Common myeloid progenitor, CD34-positive (primary cell): ENCODE measurements at regions of chr19 and their contacts with region 1.

Region 1: DNA sequence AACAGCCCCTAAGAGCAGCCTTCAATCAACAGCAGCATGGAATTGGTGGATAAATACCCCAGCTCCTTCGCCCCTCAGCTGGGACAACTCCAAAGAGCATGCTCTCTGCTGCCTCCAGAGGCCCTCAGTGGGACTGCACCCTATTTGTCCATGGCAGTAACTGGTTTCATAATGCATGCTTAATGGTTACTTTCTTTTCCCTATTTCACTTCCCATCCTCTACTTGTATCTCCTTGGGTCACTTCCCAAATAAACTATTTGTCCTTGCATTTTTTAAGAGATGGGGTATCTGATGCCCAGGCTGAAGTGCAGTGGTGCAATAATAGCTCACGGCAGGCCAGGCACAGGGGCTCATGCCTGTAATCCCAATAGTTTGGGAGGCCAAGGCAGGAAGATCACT is 13.5 kb upstream of the TPM4 start:
- DNase-seq: peak in 2 of 3 donors; percentile 67 to 78
- H3K4me3 ChIP-seq: no peak overlapping the region
- H3K27ac ChIP-seq: no peak overlapping the region
- H3K4me1 ChIP-seq: peaks cover 0 to 15% (median 4%) of the 10 kb centered on the region in 4 experiments
- H3K27me3 ChIP-seq: no peaks in the 10 kb centered on the region

Region 2: DNA sequence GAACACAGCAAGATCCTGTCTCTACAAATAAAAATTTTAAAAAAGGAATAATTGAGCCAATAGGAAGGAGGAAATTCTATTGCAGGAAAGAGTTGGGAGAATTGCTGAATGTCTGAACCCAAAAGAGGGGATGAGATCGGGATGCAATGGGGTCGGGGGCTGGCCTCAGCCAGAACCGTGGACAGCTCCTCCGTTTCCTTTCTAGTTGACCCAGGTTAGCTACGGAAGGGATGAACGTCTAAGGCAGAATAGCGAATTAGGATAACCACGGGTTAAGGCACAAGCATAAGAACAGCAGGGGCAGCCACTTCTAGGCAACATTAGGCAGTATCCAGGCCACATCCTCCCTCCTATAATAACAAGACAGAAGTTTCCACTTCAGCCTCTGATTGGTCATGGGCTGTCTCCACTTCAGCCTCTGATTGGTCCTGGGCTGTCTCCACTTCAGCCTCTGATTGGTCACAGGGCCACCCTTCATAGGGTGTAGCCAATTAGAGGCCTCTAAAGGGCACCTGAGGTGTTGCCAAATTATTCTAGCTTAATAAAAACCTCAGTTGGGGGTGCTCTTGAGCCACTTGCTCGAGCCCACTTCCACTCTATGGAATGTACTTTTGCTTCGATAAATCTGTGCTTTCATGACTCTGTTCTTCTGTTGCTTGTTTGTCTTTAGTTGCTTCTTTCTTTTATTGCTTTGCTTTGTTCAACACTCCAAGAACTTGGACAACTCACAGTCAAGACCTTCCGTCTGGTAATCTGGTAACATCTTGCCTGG is 11.3 kb before region 1 on chr19:
- CTCF ChIA-PET with region 1: interaction called, 29 read pairs
- POLR2A ChIA-PET with region 1: no interaction called
- DNase-seq: peak; percentile 59 to 82 (median 72)
- H3K4me3 ChIP-seq: no peak overlapping the region
- H3K27ac ChIP-seq: no peak overlapping the region
- H3K4me1 ChIP-seq: peaks cover 0 to 2% (median 0%) of the 10 kb centered on the region in 4 experiments
- H3K27me3 ChIP-seq: no peaks in the 10 kb centered on the region

Region 3: DNA sequence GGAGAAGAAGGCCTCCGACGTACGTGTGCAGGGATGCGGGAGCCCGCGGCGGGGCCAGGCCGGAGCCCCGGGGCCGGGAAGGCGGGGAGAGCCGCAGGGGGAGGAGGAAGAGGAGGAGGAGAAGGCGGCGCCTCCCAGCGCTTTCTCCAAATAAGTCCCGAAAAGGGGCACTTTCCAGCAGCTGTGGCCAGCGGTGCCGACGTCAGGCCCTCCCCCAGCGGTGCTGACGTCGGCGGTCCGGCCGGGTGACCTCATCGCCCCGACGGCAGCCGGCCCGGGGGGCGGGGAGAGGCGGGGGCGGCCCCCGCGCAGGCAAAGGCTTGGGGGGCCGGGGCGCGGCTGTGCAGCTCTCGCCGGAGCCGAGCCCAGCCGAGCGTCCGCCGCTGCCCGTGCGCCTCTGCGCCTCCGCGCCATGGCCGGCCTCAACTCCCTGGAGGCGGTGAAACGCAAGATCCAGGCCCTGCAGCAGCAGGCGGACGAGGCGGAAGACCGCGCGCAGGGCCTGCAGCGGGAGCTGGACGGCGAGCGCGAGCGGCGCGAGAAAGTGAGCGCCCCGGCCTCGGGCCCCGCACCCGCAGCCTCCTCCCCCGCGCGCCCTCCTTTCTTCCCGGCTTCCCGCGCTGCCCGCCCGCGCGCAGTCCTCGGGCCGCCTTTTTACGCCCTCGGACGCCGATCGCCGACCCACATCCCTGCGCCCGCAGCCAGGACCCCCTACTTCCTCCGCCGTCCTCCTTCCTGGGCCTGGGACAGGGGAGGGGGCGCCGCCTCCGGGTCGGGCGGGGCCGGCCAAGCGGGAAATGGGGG is 13.6 kb after region 1 on chr19 and contains the start of gene TPM4:
- CTCF ChIA-PET with region 1: interaction called, 40 read pairs
- POLR2A ChIA-PET with region 1: no interaction called
- DNase-seq: peak; percentile 80 to 89 (median 88)
- H3K4me3 ChIP-seq: peak within 1 kb of the TSS; percentile 76 to 98 (median 85)
- H3K27ac ChIP-seq: peak within 1 kb of the TSS; percentile 74 to 87
- H3K4me1 ChIP-seq: peaks cover 13 to 81% (median 71%) of the 10 kb centered on the region in 4 experiments
- H3K27me3 ChIP-seq: no peaks in the 10 kb centered on the region